CD14-positive monocyte (primary cell): ENCODE measurements at regions of chr4 and their contacts with region 1.

Region 1: GRCh38 chr4:40749717-40750460 is at the start of gene NSUN7:
- DNase-seq: peak in 2 of 3 donors; percentile 23 to 37
- H3K4me3 ChIP-seq: peak within 1 kb of the TSS; percentile 49 to 74 (median 51)
- H3K4me3 Mint-ChIP-seq: peak within 1 kb of the TSS; percentile 83 to 92
- H3K27ac ChIP-seq: peak within 1 kb of the TSS in 1 of 2 donors; percentile 41
- H3K27ac Mint-ChIP-seq: peak within 1 kb of the TSS in 3 of 7 donors; percentile 26 to 49 (median 36)
- H3K4me1 ChIP-seq: peaks cover 14 to 15% of the 10 kb centered on the region in 2 donors
- H3K4me1 Mint-ChIP-seq: peaks cover 11% of the 10 kb centered on the region
- H3K27me3 ChIP-seq: peaks cover 8 to 22% of the 10 kb centered on the region in 2 donors
- H3K27me3 Mint-ChIP-seq: peaks cover 19 to 35% (median 31%) of the 10 kb centered on the region in 3 donors
- CTCF ChIP-seq: no peak
- polyA plus RNA-seq, gene NSUN7: 0.21 to 0.62 (median 0.57) TPM

Region 2: DNA sequence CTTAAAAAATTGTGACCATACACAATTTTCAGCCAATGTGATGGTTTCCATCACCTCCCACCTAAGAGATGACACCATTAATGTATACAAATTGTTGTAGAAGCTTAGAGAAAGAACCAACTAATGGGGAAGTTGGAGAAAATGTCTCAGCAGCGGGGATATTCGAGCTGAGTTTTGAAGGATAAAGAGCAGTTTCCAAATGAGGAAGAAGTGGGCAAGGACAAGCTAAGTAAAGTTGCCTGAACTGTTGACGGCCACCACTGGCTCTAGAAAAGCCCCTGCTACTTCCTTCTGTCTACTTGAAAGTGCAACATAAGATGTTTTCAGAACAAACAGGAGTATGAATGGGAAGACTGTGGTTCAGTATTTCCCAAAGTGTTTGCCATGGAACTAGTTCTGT is 322.8 kb before region 1 on chr4:
- intact Hi-C with region 1: no loop called
- DNase-seq: peak; percentile 13 to 39 (median 16)
- H3K4me3 ChIP-seq: no peak overlapping the region
- H3K4me3 Mint-ChIP-seq: no peak overlapping the region
- H3K27ac ChIP-seq: peak overlapping the region in 1 of 2 donors; percentile 46
- H3K27ac Mint-ChIP-seq: peak overlapping the region in 6 of 7 donors; percentile 56 to 79 (median 71)
- H3K4me1 ChIP-seq: no peaks in the 10 kb centered on the region
- H3K4me1 Mint-ChIP-seq: peaks cover 5% of the 10 kb centered on the region
- H3K27me3 ChIP-seq: no peaks in the 10 kb centered on the region
- H3K27me3 Mint-ChIP-seq: no peaks in the 10 kb centered on the region
- CTCF ChIP-seq: no peak

Region 3: DNA sequence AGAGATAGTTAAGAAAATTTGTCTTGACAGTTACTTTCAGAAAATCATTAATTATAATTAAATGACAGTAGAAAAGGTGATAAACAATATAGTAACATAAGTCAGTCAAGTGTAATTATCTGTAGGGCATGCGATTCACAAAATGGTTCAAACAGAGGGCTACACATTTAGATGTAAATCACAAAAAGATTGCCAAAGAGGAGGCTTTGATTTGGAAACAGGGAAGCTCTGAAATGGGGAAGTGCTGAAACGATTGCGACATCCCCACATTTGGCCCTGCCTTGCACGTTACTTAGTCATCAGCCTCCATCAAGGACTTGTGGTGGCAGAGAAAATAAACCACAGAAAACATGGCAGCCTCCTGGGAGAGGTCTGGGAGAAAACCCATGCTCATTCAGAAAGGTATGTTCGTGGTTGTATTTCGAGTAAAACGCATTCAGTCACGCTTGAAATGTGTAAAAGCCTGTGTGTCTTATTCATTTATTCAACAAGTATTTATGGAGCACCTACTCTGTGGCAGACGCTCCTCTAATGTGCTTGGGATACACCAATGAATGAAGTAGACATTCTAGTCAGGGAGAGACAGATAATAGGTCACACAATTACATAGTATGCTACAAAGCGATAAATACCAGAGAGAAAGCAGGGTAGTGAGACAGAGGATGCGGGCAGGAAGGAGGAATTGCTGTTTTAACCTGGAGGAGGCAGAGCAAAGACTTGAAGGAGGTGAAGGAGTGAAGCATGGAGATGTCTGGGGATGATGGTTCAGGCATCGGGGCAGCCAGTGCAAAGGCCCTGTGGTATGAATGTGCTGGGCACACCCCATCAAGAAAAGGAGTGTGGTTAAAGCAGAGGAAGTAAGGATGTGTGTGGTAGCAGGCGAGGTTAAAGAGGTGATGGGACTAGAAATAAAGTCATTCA is 128.0 kb before region 1 on chr4:
- intact Hi-C with region 1: no loop called
- DNase-seq: peak; percentile 99
- H3K4me3 ChIP-seq: peak overlapping the region in 2 of 3 experiments; percentile 9 to 56
- H3K4me3 Mint-ChIP-seq: peak overlapping the region; percentile 13 to 75
- H3K27ac ChIP-seq: peak overlapping the region; percentile 88 to 97
- H3K27ac Mint-ChIP-seq: peak overlapping the region; percentile 94 to 98 (median 97)
- H3K4me1 ChIP-seq: peaks cover 84 to 92% of the 10 kb centered on the region in 2 donors
- H3K4me1 Mint-ChIP-seq: peaks cover 83% of the 10 kb centered on the region
- H3K27me3 ChIP-seq: no peaks in the 10 kb centered on the region
- H3K27me3 Mint-ChIP-seq: peaks cover 0 to 1% (median 0%) of the 10 kb centered on the region in 3 donors
- CTCF ChIP-seq: no peak

Region 4: GRCh38 chr4:40788331-40788730 is 38.4 kb after region 1 on chr4:
- intact Hi-C with region 1: loop called in 1 of 2 experiments (anchors 5 kb)
- DNase-seq: no peak
- H3K4me3 ChIP-seq: peak overlapping the region in 1 of 3 experiments; percentile 3
- H3K4me3 Mint-ChIP-seq: no peak overlapping the region
- H3K27ac ChIP-seq: no peak overlapping the region
- H3K27ac Mint-ChIP-seq: no peak overlapping the region
- H3K4me1 ChIP-seq: peaks cover 11% of the 10 kb centered on the region in 2 donors
- H3K4me1 Mint-ChIP-seq: peaks cover 16% of the 10 kb centered on the region
- H3K27me3 ChIP-seq: no peaks in the 10 kb centered on the region
- H3K27me3 Mint-ChIP-seq: peaks cover 2 to 3% (median 2%) of the 10 kb centered on the region in 3 donors
- CTCF ChIP-seq: no peak

Region 5: DNA sequence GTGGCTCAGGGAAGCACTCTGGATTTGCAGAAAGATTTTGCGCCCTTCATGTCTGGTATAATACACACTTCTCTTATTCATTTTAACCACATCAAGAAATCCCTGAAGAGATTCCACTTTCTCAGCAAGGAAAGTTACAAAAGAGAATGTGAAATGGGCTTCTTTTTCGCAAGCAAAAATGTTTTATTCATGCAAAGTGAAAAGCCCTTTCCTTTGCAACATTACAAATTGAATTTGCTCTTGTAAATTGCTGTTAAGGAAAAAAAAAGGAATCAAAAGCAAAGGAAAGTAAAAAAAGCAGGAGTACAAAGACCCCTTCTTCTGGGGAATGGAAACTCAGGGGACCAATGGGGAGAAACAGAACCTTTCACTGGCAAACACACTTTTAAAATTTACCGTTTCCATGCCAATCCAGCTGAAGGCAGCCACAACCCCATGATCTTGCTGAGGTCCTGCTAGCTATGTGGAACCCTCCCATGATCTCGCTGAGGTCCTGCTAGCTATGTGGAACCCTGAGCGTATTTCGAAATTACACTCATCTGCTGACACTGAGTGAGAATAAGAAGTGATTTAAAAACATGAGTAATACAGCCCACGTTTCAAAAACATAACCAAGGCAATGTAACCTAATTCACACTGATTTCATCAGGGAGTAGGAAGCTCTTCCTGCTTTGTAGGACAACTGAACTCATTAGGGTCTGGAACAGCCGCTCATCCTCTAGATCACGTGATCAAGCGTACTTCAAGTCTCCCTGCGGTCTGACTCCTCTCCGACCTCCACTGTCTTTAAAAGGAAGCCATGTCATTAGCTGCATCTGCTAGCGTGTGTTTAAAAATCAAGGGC is 137.6 kb after region 1 on chr4:
- intact Hi-C with region 1: no loop called
- DNase-seq: peak; percentile 32 to 68 (median 33)
- H3K4me3 ChIP-seq: no peak overlapping the region
- H3K4me3 Mint-ChIP-seq: no peak overlapping the region
- H3K27ac ChIP-seq: no peak overlapping the region
- H3K27ac Mint-ChIP-seq: peak overlapping the region in 2 of 7 donors; percentile 21 to 27
- H3K4me1 ChIP-seq: no peaks in the 10 kb centered on the region
- H3K4me1 Mint-ChIP-seq: peaks cover 11% of the 10 kb centered on the region
- H3K27me3 ChIP-seq: no peaks in the 10 kb centered on the region
- H3K27me3 Mint-ChIP-seq: peaks cover 0 to 7% (median 0%) of the 10 kb centered on the region in 3 donors
- CTCF ChIP-seq: no peak

Region 6: GRCh38 chr4:41133454-41134018 is 383.6 kb after region 1 on chr4:
- intact Hi-C with region 1: no loop called
- DNase-seq: no peak
- H3K4me3 ChIP-seq: no peak overlapping the region
- H3K4me3 Mint-ChIP-seq: no peak overlapping the region
- H3K27ac ChIP-seq: no peak overlapping the region
- H3K27ac Mint-ChIP-seq: no peak overlapping the region
- H3K4me1 ChIP-seq: no peaks in the 10 kb centered on the region
- H3K4me1 Mint-ChIP-seq: no peaks in the 10 kb centered on the region
- H3K27me3 ChIP-seq: no peaks in the 10 kb centered on the region
- H3K27me3 Mint-ChIP-seq: peaks cover 0 to 3% (median 0%) of the 10 kb centered on the region in 3 donors
- CTCF ChIP-seq: no peak